ENCODE measurements at regions of chr5 and their contacts with region 1.

Region 1: DNA sequence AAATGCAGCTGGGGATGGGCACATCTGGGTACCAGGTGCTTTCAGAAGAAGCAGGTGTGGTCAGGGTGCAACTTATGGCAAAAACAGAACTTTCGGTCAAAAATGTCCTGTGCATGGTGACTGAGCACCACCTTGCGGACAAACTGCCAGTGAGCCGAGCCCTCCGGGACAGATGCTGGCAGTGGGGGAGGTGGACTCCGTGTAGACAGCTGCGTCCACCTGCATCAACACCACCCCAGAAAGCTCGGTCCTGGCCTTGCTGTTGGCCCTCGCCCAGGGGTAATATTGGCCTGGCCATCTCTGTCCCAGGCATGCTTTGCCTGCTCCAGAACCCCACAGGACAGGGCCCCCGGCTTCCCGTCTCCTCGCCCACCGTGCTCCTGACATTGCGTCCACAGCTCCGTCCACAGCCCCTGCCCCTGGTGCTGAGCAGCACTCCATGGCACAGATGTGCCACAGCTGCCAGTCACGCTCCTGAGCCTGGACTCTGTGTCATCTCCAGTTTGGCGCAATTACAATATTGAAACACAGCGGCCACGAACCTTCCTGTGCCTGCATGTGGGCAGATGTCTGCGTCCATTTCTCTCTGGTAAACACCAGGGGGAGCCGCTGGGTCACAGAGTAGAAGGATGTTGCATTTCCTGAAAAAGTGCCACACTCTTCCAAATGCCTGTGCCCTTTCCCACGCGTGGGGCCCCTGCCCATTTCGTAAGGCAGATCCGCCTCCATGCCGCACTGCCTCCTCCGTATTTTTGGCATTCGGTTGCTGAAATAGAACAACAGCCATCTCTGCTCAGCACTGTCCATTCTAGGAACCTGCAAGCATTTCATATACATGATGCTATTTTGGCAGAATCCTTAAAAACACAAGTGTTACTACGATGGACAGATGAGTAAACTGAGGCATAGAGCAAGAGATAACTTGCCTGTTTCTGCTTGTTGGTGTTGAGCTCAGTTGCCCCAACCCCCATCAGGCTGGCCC is 33.4 kb upstream of the SLC6A19 start:
- DNase-seq: peak; percentile 80
- ATAC-seq: peak; percentile 85
- H3K4me3 Mint-ChIP-seq: peak overlapping the region; percentile 38
- H3K27ac Mint-ChIP-seq: no peak overlapping the region
- H3K4me1 Mint-ChIP-seq: peaks cover 8% of the 10 kb centered on the region
- H3K27me3 Mint-ChIP-seq: peaks cover 10% of the 10 kb centered on the region

Region 2: DNA sequence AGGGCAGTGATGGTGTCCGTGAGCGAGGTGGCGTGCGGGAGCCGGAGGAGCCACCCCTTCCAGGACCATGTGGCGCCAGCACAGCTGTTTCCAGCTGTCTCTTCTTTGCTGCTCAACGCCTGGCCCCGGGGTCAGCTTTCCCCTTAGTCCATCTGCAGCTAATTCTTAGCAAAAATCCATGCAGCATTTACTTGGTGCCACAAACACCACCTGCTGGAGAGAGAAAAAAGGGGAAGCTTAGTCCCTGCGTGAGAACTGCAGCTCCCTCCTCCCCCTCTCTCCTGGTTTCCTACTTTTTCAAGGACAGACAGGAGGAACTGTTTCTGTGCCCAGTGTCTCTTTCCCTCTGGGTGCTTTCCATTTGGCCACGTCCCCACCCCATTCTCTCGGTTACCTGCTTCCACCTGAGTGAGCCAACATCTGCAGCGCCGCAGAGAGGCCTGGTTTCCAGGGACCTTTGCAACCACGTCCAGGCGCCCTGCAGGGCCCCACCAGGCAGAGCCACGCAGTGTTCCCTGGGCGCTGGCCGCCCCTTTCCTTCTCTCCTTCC is 36.7 kb after region 1 on chr5:
- CTCF ChIA-PET with region 1: no interaction called
- POLR2A ChIA-PET with region 1: no interaction called
- intact Hi-C with region 1: no loop called
- DNase-seq: no peak
- ATAC-seq: no peak
- H3K4me3 Mint-ChIP-seq: no peak overlapping the region
- H3K27ac Mint-ChIP-seq: no peak overlapping the region
- H3K4me1 Mint-ChIP-seq: no peaks in the 10 kb centered on the region
- H3K27me3 Mint-ChIP-seq: no peaks in the 10 kb centered on the region

Region 3: DNA sequence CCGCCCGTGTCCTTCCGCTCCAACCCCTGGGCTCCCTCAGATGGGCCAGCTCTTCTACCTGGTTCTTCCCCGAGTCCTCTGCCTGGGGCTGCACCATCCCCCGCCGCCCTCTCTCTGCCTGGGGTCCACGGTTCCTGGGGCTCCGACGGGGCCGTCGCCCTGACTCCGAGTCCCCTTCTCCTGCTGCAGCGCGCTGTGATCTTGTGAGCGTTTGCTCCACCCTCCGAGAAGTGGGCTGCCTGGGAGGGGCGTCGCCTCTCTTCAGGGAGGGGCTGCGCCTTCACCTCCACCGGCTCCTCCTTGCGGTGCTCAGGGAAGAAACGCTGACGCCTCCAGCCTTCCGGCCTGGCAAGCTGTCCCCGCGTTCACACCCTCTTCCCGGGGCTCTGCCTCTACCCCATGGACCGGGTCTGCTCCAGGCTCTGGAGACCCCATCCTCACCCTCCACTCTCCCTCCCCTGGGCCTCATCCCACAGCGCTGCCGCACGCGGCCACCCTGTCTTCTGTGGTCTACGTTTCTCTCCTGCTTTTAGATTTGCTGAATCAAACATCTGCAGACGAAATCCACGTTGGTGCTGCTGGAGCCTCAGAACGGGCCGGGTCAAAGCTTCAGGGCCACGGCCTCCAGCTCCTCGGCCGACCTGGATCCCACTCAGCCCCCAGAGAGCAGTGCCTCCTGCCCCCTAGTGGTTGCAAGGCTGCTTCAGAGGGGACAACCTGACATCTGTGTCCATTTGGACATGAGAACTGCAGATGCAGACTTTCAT is 299.9 kb after region 1 on chr5:
- CTCF ChIA-PET with region 1: no interaction called
- POLR2A ChIA-PET with region 1: no interaction called
- intact Hi-C with region 1: loop called in 1 of 2 experiments (anchors 1 kb)
- DNase-seq: peak; percentile 54
- ATAC-seq: no peak
- H3K4me3 Mint-ChIP-seq: no peak overlapping the region
- H3K27ac Mint-ChIP-seq: no peak overlapping the region
- H3K4me1 Mint-ChIP-seq: peaks cover 6% of the 10 kb centered on the region
- H3K27me3 Mint-ChIP-seq: no peaks in the 10 kb centered on the region